AG04450 (cell line): ENCODE measurements at regions of chr10 and their contacts with region 1.

Region 1: GRCh38 chr10:17409170-17409733 is 45.1 kb downstream of the ST8SIA6 start:
- DNase-seq: no peak
- H3K4me3 ChIP-seq: no peak overlapping the region
- H3K27ac ChIP-seq: no peak overlapping the region
- H3K27me3 ChIP-seq: peaks cover 2% of the 10 kb centered on the region
- CTCF ChIP-seq: peak; percentile 64

Region 2: GRCh38 chr10:17265468-17265867 is 143.8 kb before region 1 on chr10:
- CTCF ChIA-PET with region 1: no interaction called
- POLR2A ChIA-PET with region 1: no interaction called
- DNase-seq: no peak
- H3K4me3 ChIP-seq: no peak overlapping the region
- H3K27ac ChIP-seq: no peak overlapping the region
- H3K27me3 ChIP-seq: peaks cover 14% of the 10 kb centered on the region
- CTCF ChIP-seq: no peak

Region 3: DNA sequence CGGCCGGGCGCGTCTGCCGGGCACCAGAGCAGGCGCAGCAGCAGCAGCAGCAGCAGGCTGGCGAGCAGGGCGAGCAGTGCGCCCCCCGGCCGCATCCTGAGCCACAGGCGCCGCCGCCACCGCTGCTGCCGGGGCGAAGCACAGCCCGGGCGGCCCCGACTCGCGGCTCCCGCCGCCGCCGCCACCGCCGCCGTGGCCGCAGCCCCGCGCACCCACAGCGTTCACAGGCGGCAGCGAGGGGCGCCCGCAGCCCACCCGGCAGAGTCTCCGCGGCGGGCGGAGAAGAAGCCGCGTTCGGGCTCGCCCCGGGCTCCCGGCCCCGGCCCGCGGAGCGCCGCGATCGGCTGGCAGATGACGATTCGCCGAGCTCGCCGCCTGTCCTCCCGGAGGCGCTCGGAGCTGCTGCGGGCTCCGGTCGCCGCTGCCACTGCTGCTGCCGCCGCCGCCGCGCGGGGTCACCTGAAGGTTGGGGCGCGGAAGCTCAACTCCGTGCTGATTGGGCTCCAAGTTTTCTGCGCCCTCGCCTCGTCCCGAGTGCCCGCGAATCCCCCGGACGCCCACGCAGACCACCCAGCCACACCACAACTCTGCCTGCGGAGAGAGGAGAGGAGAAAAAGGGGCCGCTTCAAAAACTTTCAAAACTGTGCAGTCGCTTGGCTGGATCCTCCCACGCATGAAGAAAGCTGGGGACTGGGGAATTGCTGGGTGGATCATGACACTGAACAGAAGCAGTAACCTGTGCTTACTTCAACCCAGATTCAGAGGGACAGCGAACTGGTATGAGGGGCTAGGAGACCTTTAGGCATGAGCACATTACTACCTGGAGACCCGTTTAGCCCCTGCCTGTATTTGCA is 45.1 kb after region 1 on chr10 and contains the start of gene ST8SIA6:
- CTCF ChIA-PET with region 1: no interaction called
- POLR2A ChIA-PET with region 1: no interaction called
- DNase-seq: no peak
- H3K4me3 ChIP-seq: peak within 1 kb of the TSS; percentile 57
- H3K27ac ChIP-seq: no peak within 1 kb of the TSS
- H3K27me3 ChIP-seq: peaks cover 15% of the 10 kb centered on the region
- CTCF ChIP-seq: no peak
- polyA plus RNA-seq, gene ST8SIA6: 0.10 TPM in 1 of 2 replicates, not detected in the other

Region 4: GRCh38 chr10:17474595-17475323 is 65.5 kb after region 1 on chr10:
- CTCF ChIA-PET with region 1: interaction called, 13 read pairs
- POLR2A ChIA-PET with region 1: no interaction called
- DNase-seq: no peak
- H3K4me3 ChIP-seq: no peak overlapping the region
- H3K27ac ChIP-seq: no peak overlapping the region
- H3K27me3 ChIP-seq: no peaks in the 10 kb centered on the region
- CTCF ChIP-seq: peak; percentile 44